Heart right ventricle (tissue), 16 donors: ENCODE measurements at regions of chr11 and their contacts with region 1.

Region 1: GRCh38 chr11:104997288-104997687 is 25.7 kb downstream of the CASP5 start:
- DNase-seq: no peak
- ATAC-seq: no peak
- H3K4me3 ChIP-seq: no peak overlapping the region
- H3K27ac ChIP-seq: no peak overlapping the region
- H3K4me1 ChIP-seq: peaks cover 0 to 2% (median 0%) of the 10 kb centered on the region in 9 donors
- H3K27me3 ChIP-seq: no peaks in the 10 kb centered on the region
- CTCF ChIP-seq: peak in 1 of 9 donors; percentile 34

Region 2: DNA sequence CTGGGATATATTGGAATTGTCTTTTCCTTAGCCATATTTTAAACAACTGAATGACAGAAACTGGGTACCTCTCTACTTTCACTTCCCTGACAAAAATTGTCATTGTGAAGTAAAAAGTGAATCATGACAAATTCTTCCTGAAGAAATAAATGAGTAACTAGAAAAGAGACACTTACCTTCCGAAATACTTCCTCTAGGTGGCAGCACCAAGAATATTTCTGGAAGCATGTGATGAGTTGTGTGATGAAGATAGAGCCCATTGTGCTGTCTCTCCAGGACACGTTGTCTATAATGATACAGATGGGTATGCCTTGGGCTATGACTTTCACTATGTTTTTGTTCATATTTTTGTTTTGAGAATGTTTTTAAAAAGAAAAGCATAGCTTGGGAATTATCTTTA is 50.4 kb before region 1 on chr11:
- intact Hi-C with region 1: loop called in 1 of 10 experiments (anchors 10 kb)
- DNase-seq: peak in 1 of 2 donors; percentile 33
- ATAC-seq: peak in 1 of 8 donors; percentile 53
- H3K4me3 ChIP-seq: no peak overlapping the region
- H3K27ac ChIP-seq: peak overlapping the region in 1 of 10 donors; percentile 8
- H3K4me1 ChIP-seq: peaks cover 0 to 5% (median 0%) of the 10 kb centered on the region in 9 donors
- H3K27me3 ChIP-seq: no peaks in the 10 kb centered on the region
- CTCF ChIP-seq: peak in 7 of 9 donors; percentile 46 to 66 (median 56)

Region 3: DNA sequence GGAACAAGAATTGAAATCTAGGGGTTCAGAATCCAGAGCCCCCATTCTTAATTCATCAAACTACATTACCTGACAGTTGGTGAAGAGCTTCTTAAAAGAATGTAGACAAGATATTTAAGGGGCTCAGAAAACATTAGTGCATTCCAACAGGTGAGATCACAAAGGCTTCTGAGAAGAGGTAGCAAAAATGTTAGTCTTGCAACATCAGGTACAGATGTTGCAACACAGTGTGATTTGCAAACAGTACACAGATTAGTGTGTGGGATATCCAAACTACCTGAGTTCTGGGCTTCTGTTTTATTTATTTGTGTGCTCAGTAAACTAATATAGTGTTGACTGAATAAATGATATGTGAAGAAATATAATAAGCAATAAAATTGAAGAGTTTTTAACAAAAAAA is 40.8 kb before region 1 on chr11:
- intact Hi-C with region 1: loop called in 1 of 10 experiments (anchors 5 kb)
- DNase-seq: no peak
- ATAC-seq: no peak
- H3K4me3 ChIP-seq: no peak overlapping the region
- H3K27ac ChIP-seq: no peak overlapping the region
- H3K4me1 ChIP-seq: peaks cover 0 to 53% (median 15%) of the 10 kb centered on the region in 9 donors
- H3K27me3 ChIP-seq: no peaks in the 10 kb centered on the region
- CTCF ChIP-seq: no peak